Heart right ventricle (tissue), 16 donors: ENCODE measurements at regions of chr5 and their contacts with region 1.

Region 1: DNA sequence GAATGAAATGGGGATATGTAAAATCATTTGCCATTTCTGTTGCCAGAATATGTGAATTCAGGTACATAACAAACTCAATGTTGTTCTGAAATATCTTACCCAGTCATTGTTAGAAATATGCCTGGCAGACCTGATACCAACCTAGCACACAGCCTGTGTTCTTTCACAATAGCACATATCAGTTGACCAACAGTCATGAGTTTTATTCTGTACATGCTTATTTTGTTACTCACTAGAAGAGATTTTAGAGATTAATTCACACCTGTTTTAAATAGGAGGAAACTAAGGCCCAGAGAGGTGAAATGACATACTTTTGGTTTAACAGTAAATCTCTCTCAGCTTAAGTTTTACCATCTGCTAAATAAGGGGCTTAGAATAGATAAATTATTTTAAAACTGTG is 8.4 kb upstream of the PPP1R2B start:
- DNase-seq: no peak
- ATAC-seq: no peak
- H3K4me3 ChIP-seq: no peak overlapping the region
- H3K27ac ChIP-seq: no peak overlapping the region
- H3K4me1 ChIP-seq: no peaks in the 10 kb centered on the region
- H3K27me3 ChIP-seq: peaks cover 0 to 3% (median 0%) of the 10 kb centered on the region in 7 donors
- CTCF ChIP-seq: no peak

Region 2: GRCh38 chr5:157120102-157120501 is 278.4 kb after region 1 on chr5:
- intact Hi-C with region 1: loop called in 1 of 10 experiments (anchors 10 kb)
- DNase-seq: no peak
- ATAC-seq: no peak
- H3K4me3 ChIP-seq: no peak overlapping the region
- H3K27ac ChIP-seq: no peak overlapping the region
- H3K4me1 ChIP-seq: peaks cover 0 to 12% (median 0%) of the 10 kb centered on the region in 9 donors
- H3K27me3 ChIP-seq: no peaks in the 10 kb centered on the region
- CTCF ChIP-seq: no peak